Activated T-helper 1 cell treated with anti-CD3 and anti-CD28 coated beads, Interleukin-12 subunit alpha, Interleukin-12 subunit beta, Interleukin-2, Interleukin-4 antibody, amounts not matched to agents 30 ng/mL and 10 ng/mL and 1 ng/mL, durations not matched to agents 14 hours and 24 hours and 36 hours (primary cell): ENCODE measurements at regions of chr10 and their contacts with region 1.

Region 1: GRCh38 chr10:9302120-9302746 is 1247.7 kb downstream of the GATA3 start:
- DNase-seq: no peak
- H3K4me3 Mint-ChIP-seq: no peak overlapping the region
- H3K27ac Mint-ChIP-seq: no peak overlapping the region
- H3K4me1 Mint-ChIP-seq: no peaks in the 10 kb centered on the region
- H3K27me3 Mint-ChIP-seq: peaks cover 6% of the 10 kb centered on the region

Region 2: GRCh38 chr10:7525314-7526016 is 1776.8 kb before region 1 on chr10:
- intact Hi-C with region 1: loop called (anchors 1 kb)
- DNase-seq: peak; percentile 56
- H3K4me3 Mint-ChIP-seq: no peak overlapping the region
- H3K27ac Mint-ChIP-seq: peak overlapping the region; percentile 6
- H3K4me1 Mint-ChIP-seq: peaks cover 15% of the 10 kb centered on the region
- H3K27me3 Mint-ChIP-seq: peaks cover 13% of the 10 kb centered on the region

Region 3: GRCh38 chr10:7756360-7756992 is 1545.8 kb before region 1 on chr10:
- intact Hi-C with region 1: loop called (anchors 5 kb)
- DNase-seq: peak; percentile 3
- H3K4me3 Mint-ChIP-seq: no peak overlapping the region
- H3K27ac Mint-ChIP-seq: no peak overlapping the region
- H3K4me1 Mint-ChIP-seq: no peaks in the 10 kb centered on the region
- H3K27me3 Mint-ChIP-seq: no peaks in the 10 kb centered on the region

Region 4: GRCh38 chr10:7872041-7872442 is 1430.2 kb before region 1 on chr10:
- intact Hi-C with region 1: loop called (anchors 1 kb)
- DNase-seq: no peak
- H3K4me3 Mint-ChIP-seq: peak overlapping the region; percentile 53
- H3K27ac Mint-ChIP-seq: no peak overlapping the region
- H3K4me1 Mint-ChIP-seq: no peaks in the 10 kb centered on the region
- H3K27me3 Mint-ChIP-seq: peaks cover 4% of the 10 kb centered on the region

Region 5: GRCh38 chr10:9209105-9209798 is 93.0 kb before region 1 on chr10:
- intact Hi-C with region 1: loop called (anchors 2 kb)
- DNase-seq: peak; percentile 48
- H3K4me3 Mint-ChIP-seq: no peak overlapping the region
- H3K27ac Mint-ChIP-seq: no peak overlapping the region
- H3K4me1 Mint-ChIP-seq: no peaks in the 10 kb centered on the region
- H3K27me3 Mint-ChIP-seq: peaks cover 17% of the 10 kb centered on the region

Region 6: GRCh38 chr10:9550810-9551209 is 248.6 kb after region 1 on chr10:
- intact Hi-C with region 1: no loop called
- DNase-seq: no peak
- H3K4me3 Mint-ChIP-seq: no peak overlapping the region
- H3K27ac Mint-ChIP-seq: no peak overlapping the region
- H3K4me1 Mint-ChIP-seq: no peaks in the 10 kb centered on the region
- H3K27me3 Mint-ChIP-seq: no peaks in the 10 kb centered on the region

Region 7: GRCh38 chr10:9634466-9634865 is 332.2 kb after region 1 on chr10:
- intact Hi-C with region 1: no loop called
- DNase-seq: no peak
- H3K4me3 Mint-ChIP-seq: no peak overlapping the region
- H3K27ac Mint-ChIP-seq: no peak overlapping the region
- H3K4me1 Mint-ChIP-seq: no peaks in the 10 kb centered on the region
- H3K27me3 Mint-ChIP-seq: no peaks in the 10 kb centered on the region